ENCODE measurements at regions of chr9 and their contacts with region 1.

Region 1: DNA sequence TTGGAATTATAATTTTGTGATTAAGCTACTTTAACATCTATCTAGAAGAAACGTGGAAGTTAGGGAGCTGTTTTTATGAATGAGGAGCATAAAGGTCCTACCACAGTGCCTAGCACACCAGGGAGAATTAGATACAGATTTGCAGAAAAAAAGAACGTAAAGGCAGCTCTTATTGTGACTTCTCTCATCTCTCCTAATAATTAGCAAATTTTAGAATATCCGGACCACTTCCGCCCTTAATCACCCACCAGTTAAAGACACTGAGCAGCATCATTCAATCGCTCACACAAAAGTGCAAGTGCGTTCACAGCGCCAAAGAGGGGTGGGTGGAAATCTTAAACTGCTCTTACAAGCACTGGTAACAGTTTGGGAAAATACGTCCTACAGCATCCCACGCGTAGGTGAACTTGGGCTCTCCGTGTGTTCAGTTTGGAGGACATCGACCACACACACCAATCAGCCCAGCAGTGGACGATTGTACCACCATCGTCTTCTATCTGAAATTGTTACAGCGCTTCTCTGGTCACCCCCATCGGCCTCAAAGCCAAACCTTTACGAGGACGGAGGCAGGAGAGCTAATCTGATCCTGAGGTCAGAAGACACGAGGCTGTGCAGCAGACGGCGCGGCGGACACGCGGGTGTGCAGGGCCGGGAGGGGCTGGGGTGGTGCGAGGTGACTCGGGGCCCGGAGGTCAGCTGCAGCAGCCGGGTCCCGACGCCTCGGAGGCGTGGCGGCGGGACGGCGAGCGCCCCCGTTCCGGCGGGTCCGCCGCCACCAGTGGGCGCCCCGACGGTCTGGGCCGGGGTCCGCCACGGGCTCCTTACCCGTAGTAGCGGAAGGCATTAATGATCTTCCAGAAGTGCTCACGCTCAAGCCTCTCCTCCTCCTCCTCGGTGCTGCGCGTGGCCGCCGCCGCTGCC is 646 bp downstream of the CARNMT1 start:
- DNase-seq: peak; percentile 48
- H3K4me3 Mint-ChIP-seq: peak overlapping the region; percentile 95
- H3K27ac Mint-ChIP-seq: peak overlapping the region; percentile 98
- H3K4me1 Mint-ChIP-seq: peaks cover 45% of the 10 kb centered on the region
- H3K27me3 Mint-ChIP-seq: peaks cover 3% of the 10 kb centered on the region

Region 2: GRCh38 chr9:74496819-74497747 is 530.4 kb before region 1 on chr9 and contains the start of gene RORB:
- intact Hi-C with region 1: loop called (anchors 5 kb)
- DNase-seq: peak; percentile 36
- H3K4me3 Mint-ChIP-seq: peak within 1 kb of the TSS; percentile 86
- H3K27ac Mint-ChIP-seq: no peak within 1 kb of the TSS
- H3K4me1 Mint-ChIP-seq: peaks cover 34% of the 10 kb centered on the region
- H3K27me3 Mint-ChIP-seq: peaks cover 66% of the 10 kb centered on the region
- total RNA-seq, gene RORB: 0.02 and 0.11 TPM in 2 replicates

Region 3: GRCh38 chr9:74952281-74953151 is 74.9 kb before region 1 on chr9 and contains the start of gene C9orf40:
- intact Hi-C with region 1: loop called (anchors 1 kb)
- DNase-seq: peak; percentile 88
- H3K4me3 Mint-ChIP-seq: peak within 1 kb of the TSS; percentile 93
- H3K27ac Mint-ChIP-seq: peak within 1 kb of the TSS; percentile 89
- H3K4me1 Mint-ChIP-seq: peaks cover 24% of the 10 kb centered on the region
- H3K27me3 Mint-ChIP-seq: no peaks in the 10 kb centered on the region
- total RNA-seq, gene C9orf40: 19.2 and 19.6 TPM in 2 replicates

Region 4: GRCh38 chr9:75013735-75014134 is 13.7 kb before region 1 on chr9:
- intact Hi-C with region 1: no loop called
- DNase-seq: no peak
- H3K4me3 Mint-ChIP-seq: no peak overlapping the region
- H3K27ac Mint-ChIP-seq: no peak overlapping the region
- H3K4me1 Mint-ChIP-seq: peaks cover 42% of the 10 kb centered on the region
- H3K27me3 Mint-ChIP-seq: no peaks in the 10 kb centered on the region

Region 5: GRCh38 chr9:75088260-75088905 is 60.9 kb after region 1 on chr9 and contains the start of gene OSTF1:
- intact Hi-C with region 1: loop called (anchors 1 kb)
- DNase-seq: peak; percentile 93
- H3K4me3 Mint-ChIP-seq: peak within 1 kb of the TSS; percentile 97
- H3K27ac Mint-ChIP-seq: peak within 1 kb of the TSS; percentile 94
- H3K4me1 Mint-ChIP-seq: peaks cover 62% of the 10 kb centered on the region
- H3K27me3 Mint-ChIP-seq: no peaks in the 10 kb centered on the region
- total RNA-seq, gene OSTF1: 86.8 and 87.5 TPM in 2 replicates

Measured in activated T-helper 2 cell treated with anti-CD3 and anti-CD28 coated beads, Interferon-gamma antibody, Interleukin-2, Interleukin-4, amounts not matched to agents 10 μg/mL and 5 μg/mL and 100 μg/mL, durations not matched to agents 14 hours and 24 hours and 36 hours (primary cell).